Gastrocnemius medialis (tissue), 4 donors: ENCODE measurements at regions of chr6 and their contacts with region 1.

Region 1: GRCh38 chr6:3721810-3722626 is 29.5 kb downstream of the PXDC1 start:
- DNase-seq: no peak
- ATAC-seq: no peak
- H3K4me3 ChIP-seq: no peak overlapping the region
- H3K27ac ChIP-seq: peak overlapping the region; percentile 36 to 60 (median 42)
- H3K4me1 ChIP-seq: peaks cover 0 to 15% of the 10 kb centered on the region in 2 donors
- H3K27me3 ChIP-seq: no peaks in the 10 kb centered on the region
- CTCF ChIP-seq: no peak
- POLR2A ChIP-seq: no peak

Region 2: GRCh38 chr6:3484192-3484591 is 237.8 kb before region 1 on chr6:
- in situ Hi-C with region 1: no loop called
- intact Hi-C with region 1: loop called (anchors 5 kb)
- DNase-seq: no peak
- ATAC-seq: no peak
- H3K4me3 ChIP-seq: no peak overlapping the region
- H3K27ac ChIP-seq: no peak overlapping the region
- H3K4me1 ChIP-seq: no peaks in the 10 kb centered on the region
- H3K27me3 ChIP-seq: no peaks in the 10 kb centered on the region
- CTCF ChIP-seq: no peak
- POLR2A ChIP-seq: no peak

Region 3: GRCh38 chr6:3522561-3523250 is 199.3 kb before region 1 on chr6:
- in situ Hi-C with region 1: no loop called
- intact Hi-C with region 1: no loop called
- DNase-seq: no peak
- ATAC-seq: no peak
- H3K4me3 ChIP-seq: no peak overlapping the region
- H3K27ac ChIP-seq: no peak overlapping the region
- H3K4me1 ChIP-seq: peaks cover 0 to 8% of the 10 kb centered on the region in 2 donors
- H3K27me3 ChIP-seq: peaks cover 0 to 2% (median 0%) of the 10 kb centered on the region in 3 donors
- CTCF ChIP-seq: no peak
- POLR2A ChIP-seq: no peak

Region 4: GRCh38 chr6:3841711-3842565 is 119.9 kb after region 1 on chr6:
- in situ Hi-C with region 1: no loop called
- intact Hi-C with region 1: no loop called
- DNase-seq: peak; percentile 78 to 85
- ATAC-seq: peak; percentile 93 to 95
- H3K4me3 ChIP-seq: no peak overlapping the region
- H3K27ac ChIP-seq: peak overlapping the region; percentile 33 to 77 (median 63)
- H3K4me1 ChIP-seq: peaks cover 16 to 20% of the 10 kb centered on the region in 2 donors
- H3K27me3 ChIP-seq: no peaks in the 10 kb centered on the region
- CTCF ChIP-seq: no peak
- POLR2A ChIP-seq: peak; percentile 41 to 58

Region 5: GRCh38 chr6:3856576-3856975 is 134.6 kb after region 1 on chr6:
- in situ Hi-C with region 1: no loop called
- intact Hi-C with region 1: no loop called
- DNase-seq: no peak
- ATAC-seq: no peak
- H3K4me3 ChIP-seq: no peak overlapping the region
- H3K27ac ChIP-seq: no peak overlapping the region
- H3K4me1 ChIP-seq: no peaks in the 10 kb centered on the region
- H3K27me3 ChIP-seq: no peaks in the 10 kb centered on the region
- CTCF ChIP-seq: no peak
- POLR2A ChIP-seq: no peak

Region 6: DNA sequence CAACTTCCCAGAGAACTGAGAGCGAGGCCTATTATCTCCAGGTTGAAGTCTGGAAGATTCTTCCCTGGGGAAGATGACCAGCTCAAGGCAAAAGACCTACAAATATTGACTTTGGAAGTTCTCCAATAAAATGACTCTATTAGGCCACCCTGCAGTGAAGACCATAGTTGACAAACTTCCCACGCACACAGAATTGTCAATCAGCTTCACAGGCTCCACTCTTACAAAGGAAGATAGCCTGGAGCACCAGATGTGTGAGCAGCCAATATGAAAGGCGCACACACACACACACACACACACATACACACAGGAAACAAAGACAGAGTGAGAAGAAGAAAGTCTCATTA is 240.9 kb after region 1 on chr6:
- in situ Hi-C with region 1: no loop called
- intact Hi-C with region 1: no loop called
- DNase-seq: no peak
- ATAC-seq: no peak
- H3K4me3 ChIP-seq: no peak overlapping the region
- H3K27ac ChIP-seq: no peak overlapping the region
- H3K4me1 ChIP-seq: no peaks in the 10 kb centered on the region
- H3K27me3 ChIP-seq: no peaks in the 10 kb centered on the region
- CTCF ChIP-seq: no peak
- POLR2A ChIP-seq: no peak